ENCODE measurements at regions of chr6 and their contacts with region 1.

Region 1: DNA sequence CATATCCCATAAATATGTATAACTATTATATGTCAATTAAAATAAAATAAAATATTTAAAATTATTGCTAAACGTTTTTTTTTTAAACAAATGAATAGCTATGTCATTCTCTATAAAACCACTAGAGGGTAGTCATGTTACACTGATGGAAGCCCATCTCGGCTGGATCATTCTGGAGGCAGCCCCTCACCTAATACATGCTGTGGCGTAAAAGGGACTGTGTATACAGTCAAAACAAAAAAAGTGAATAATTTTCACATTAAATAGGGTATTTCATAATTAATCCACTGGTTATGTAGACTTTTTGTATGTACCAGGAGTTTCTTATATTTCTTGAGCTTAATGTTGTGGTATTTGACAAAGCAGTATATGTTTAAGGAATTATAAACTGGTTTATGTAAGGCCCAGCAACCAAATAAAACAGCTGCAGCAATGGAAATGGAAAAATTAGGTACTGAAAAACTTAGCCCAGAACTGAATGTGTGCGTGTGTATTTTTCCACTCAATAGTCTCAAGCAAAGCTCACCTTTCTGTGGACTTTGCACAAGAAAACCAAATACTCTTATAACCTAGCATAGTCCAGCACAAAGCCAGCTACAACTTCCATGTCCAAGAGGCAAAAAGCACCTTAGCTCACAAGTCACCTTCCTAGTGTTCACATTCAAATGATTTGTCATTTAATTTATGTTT is 81.7 kb downstream of the COL9A1 start:
- DNase-seq: peak in 1 of 35 experiments; percentile 27
- ATAC-seq: peak in 1 of 4 experiments; percentile 35
- H3K4me3 ChIP-seq: no peak overlapping the region
- H3K4me3 Mint-ChIP-seq: no peak overlapping the region
- H3K27ac ChIP-seq: no peak overlapping the region
- H3K27ac Mint-ChIP-seq: no peak overlapping the region
- H3K4me1 ChIP-seq: no peaks in the 10 kb centered on the region
- H3K4me1 Mint-ChIP-seq: no peaks in the 10 kb centered on the region
- H3K27me3 ChIP-seq: peaks cover 0 to 4% of the 10 kb centered on the region in 2 experiments
- H3K27me3 Mint-ChIP-seq: peaks cover 2 to 15% of the 10 kb centered on the region in 2 donors

Region 2: DNA sequence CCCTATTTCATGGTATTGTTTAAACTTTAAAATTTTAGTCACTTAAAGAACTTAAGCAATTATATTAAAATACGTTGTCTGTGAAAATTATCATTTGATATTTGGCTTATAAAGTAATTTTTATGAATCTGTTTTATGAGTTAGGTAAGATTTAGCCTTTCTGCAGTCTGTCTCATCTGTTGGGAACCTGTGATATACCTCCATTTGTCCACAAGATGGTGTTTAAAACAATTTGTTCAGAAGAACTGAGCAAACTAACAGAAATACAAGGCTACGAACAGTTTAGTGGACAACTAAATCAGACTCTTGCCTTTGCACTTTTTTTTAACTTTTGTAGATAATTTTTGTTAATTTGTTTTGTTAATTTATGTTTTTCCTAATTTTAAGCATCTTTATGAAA is 10.7 kb before region 1 on chr6:
- CTCF ChIA-PET with region 1: interaction called, 4 to 7 read pairs
- POLR2A ChIA-PET with region 1: interaction called in 1 of 2 experiments, 10 read pairs
- DNase-seq: no peak
- ATAC-seq: no peak
- H3K4me3 ChIP-seq: no peak overlapping the region
- H3K4me3 Mint-ChIP-seq: no peak overlapping the region
- H3K27ac ChIP-seq: no peak overlapping the region
- H3K27ac Mint-ChIP-seq: no peak overlapping the region
- H3K4me1 ChIP-seq: no peaks in the 10 kb centered on the region
- H3K4me1 Mint-ChIP-seq: no peaks in the 10 kb centered on the region
- H3K27me3 ChIP-seq: no peaks in the 10 kb centered on the region
- H3K27me3 Mint-ChIP-seq: peaks cover 4 to 12% of the 10 kb centered on the region in 2 donors

Region 3: DNA sequence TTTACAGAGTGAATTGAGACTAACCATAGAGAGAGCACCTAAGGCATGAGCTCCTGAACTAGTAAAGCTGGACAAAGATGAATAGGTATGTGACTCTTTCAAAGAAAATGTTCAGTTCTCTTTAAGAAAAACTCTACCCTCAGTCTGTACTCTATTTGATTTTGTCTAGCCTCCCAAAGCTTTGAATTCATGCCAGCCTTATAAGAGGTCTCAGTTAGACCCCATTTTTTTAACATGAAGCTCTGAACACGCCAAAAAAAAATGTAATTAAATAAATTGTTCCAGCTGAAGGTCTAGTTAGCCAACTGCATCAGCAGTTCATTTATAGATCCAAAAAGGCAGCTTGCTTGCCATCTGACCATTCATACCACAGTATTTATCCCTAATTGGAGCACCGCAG is 10.1 kb after region 1 on chr6:
- CTCF ChIA-PET with region 1: interaction called, 5 to 21 read pairs
- POLR2A ChIA-PET with region 1: no interaction called
- DNase-seq: no peak
- ATAC-seq: no peak
- H3K4me3 ChIP-seq: no peak overlapping the region
- H3K4me3 Mint-ChIP-seq: no peak overlapping the region
- H3K27ac ChIP-seq: no peak overlapping the region
- H3K27ac Mint-ChIP-seq: no peak overlapping the region
- H3K4me1 ChIP-seq: no peaks in the 10 kb centered on the region
- H3K4me1 Mint-ChIP-seq: no peaks in the 10 kb centered on the region
- H3K27me3 ChIP-seq: peaks cover 0 to 5% of the 10 kb centered on the region in 2 experiments
- H3K27me3 Mint-ChIP-seq: peaks cover 0 to 7% of the 10 kb centered on the region in 2 donors

Measured in T-cell (primary cell).